ENCODE measurements at regions of chr10 and their contacts with region 1.

Region 1: DNA sequence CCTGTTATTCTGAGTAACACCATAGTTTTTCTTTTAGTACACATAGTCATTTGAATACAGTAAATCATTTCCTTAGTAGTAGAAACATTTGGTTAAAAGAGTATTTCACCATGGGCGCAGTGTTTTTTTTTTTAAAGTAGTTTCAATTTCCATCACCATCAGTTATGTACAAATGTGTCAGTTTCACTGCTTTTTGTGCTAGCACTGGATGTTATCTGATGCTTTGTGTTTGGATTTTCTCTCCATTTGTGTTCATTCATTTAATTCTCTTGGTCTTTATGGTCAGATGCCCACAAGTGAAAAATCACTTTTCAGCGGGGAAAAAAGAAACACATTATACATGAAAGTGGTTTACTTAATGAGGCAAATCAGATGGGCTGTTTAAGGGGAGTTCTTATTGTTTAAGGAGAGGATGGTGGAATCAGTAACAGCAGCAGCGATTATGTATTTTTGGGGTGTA is 16.0 kb upstream of the HK1 start:
- DNase-seq: no peak
- H3K4me3 ChIP-seq: no peak overlapping the region
- H3K27ac ChIP-seq: no peak overlapping the region
- H3K4me1 ChIP-seq: no peaks in the 10 kb centered on the region
- H3K27me3 ChIP-seq: no peaks in the 10 kb centered on the region
- CTCF ChIP-seq: no peak
- EP300 ChIP-seq: no peak
- POLR2A ChIP-seq: no peak

Region 2: GRCh38 chr10:69515699-69516259 is 253.5 kb after region 1 on chr10:
- in situ Hi-C with region 1: loop called in 2 of 4 experiments (anchors 25 kb)
- intact Hi-C with region 1: no loop called
- DNase-seq: peak; percentile 77
- H3K4me3 ChIP-seq: no peak overlapping the region
- H3K27ac ChIP-seq: no peak overlapping the region
- H3K4me1 ChIP-seq: no peaks in the 10 kb centered on the region
- H3K27me3 ChIP-seq: no peaks in the 10 kb centered on the region
- CTCF ChIP-seq: peak; percentile 72 to 86 (median 82)
- EP300 ChIP-seq: no peak
- POLR2A ChIP-seq: no peak

Measured in transverse colon (tissue), 4 donors.